K562 (cell line): ENCODE measurements at regions of chr7 and their contacts with region 1.

Region 1: GRCh38 chr7:128862571-128863432 is at the start of gene ATP6V1F:
- DNase-seq: peak; percentile 100
- ATAC-seq: peak; percentile 73
- H3K4me3 ChIP-seq: peak within 1 kb of the TSS; percentile 71
- H3K27ac ChIP-seq: peak within 1 kb of the TSS; percentile 87
- H3K4me1 ChIP-seq: peaks cover 38 to 68% of the 10 kb centered on the region in 2 experiments
- H3K27me3 ChIP-seq: no peaks in the 10 kb centered on the region
- CTCF ChIP-seq: peak in 1 of 3 experiments; percentile 12; a peak in 2 of 6 replicates
- EP300 ChIP-seq: no peak
- POLR2A ChIP-seq: peak; percentile 90
- RAD21 ChIP-seq: no peak
- polyA plus RNA-seq, gene ATP6V1F: 733 to 1,123 TPM

Region 2: DNA sequence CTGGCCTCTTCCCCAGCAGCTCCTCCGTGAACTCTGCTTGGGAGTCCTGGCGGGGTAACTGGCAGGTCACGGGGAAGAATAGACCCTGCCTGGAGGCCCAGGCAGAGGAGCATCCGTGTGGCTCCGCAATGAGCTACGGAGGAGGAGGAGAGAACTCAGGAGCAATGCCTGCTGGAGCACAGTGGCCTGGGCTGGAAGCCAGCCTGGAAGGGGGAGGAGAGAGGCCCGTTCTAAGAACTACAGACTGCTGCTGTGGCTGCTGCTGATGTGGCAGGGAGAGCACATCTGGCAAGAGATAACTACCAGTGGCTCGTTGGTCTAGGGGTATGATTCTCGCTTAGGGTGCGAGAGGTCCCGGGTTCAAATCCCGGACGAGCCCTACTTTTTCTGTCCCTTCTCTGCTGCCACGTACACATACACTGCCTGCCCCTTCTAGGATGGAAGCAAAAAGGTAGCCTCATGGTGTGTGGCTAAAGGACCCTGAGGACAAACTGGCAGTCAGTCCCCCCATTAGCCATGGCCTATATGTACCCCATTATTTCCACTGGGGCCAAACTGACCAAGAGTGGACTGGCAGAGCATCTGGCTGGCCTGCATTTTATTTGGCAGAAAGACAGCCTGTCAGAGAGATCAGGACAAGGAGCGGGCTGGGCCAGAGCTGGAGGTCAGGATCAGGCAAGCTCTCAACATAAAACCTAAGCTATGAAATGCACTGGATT is 79.5 kb before region 1 on chr7:
- CTCF ChIA-PET with region 1: no interaction called
- POLR2A ChIA-PET with region 1: interaction called, 3 read pairs
- in situ Hi-C with region 1: no loop called
- intact Hi-C with region 1: loop called (anchors 5 kb)
- DNase-seq: peak; percentile 92 to 95 (median 94)
- ATAC-seq: peak; percentile 93
- H3K4me3 ChIP-seq: peak overlapping the region; percentile 37
- H3K27ac ChIP-seq: peak overlapping the region; percentile 28
- H3K4me1 ChIP-seq: peaks cover 5 to 18% of the 10 kb centered on the region in 2 experiments; a peak in 4 of 5 replicates
- H3K27me3 ChIP-seq: no peaks in the 10 kb centered on the region; a peak in 1 of 5 replicates
- CTCF ChIP-seq: peak in 2 of 3 experiments; percentile 2 to 17; a peak in 1 of 6 replicates
- EP300 ChIP-seq: peak; percentile 86
- POLR2A ChIP-seq: no peak; the same call in 1 of the 2 replicates
- RAD21 ChIP-seq: peak; percentile 17 to 26; a peak in 2 of 4 replicates

Region 3: GRCh38 chr7:128849804-128850490 is 12.9 kb before region 1 on chr7:
- CTCF ChIA-PET with region 1: no interaction called
- POLR2A ChIA-PET with region 1: interaction called, 47 read pairs
- in situ Hi-C with region 1: no loop called
- intact Hi-C with region 1: no loop called
- DNase-seq: no peak
- ATAC-seq: no peak
- H3K4me3 ChIP-seq: no peak overlapping the region
- H3K27ac ChIP-seq: no peak overlapping the region
- H3K4me1 ChIP-seq: peaks cover 0 to 27% of the 10 kb centered on the region in 2 experiments; a peak in 1 of 5 replicates
- H3K27me3 ChIP-seq: no peaks in the 10 kb centered on the region
- CTCF ChIP-seq: no peak
- EP300 ChIP-seq: no peak
- POLR2A ChIP-seq: no peak
- RAD21 ChIP-seq: no peak

Region 4: GRCh38 chr7:128909625-128910257 is 46.9 kb after region 1 on chr7:
- CTCF ChIA-PET with region 1: no interaction called
- POLR2A ChIA-PET with region 1: no interaction called
- in situ Hi-C with region 1: loop called (anchors 5 kb)
- intact Hi-C with region 1: no loop called
- DNase-seq: no peak
- ATAC-seq: no peak
- H3K4me3 ChIP-seq: no peak overlapping the region
- H3K27ac ChIP-seq: no peak overlapping the region
- H3K4me1 ChIP-seq: peaks cover 0 to 30% of the 10 kb centered on the region in 2 experiments; a peak in 2 of 5 replicates
- H3K27me3 ChIP-seq: peaks cover 44 to 74% of the 10 kb centered on the region in 2 experiments
- CTCF ChIP-seq: no peak
- EP300 ChIP-seq: no peak
- POLR2A ChIP-seq: no peak
- RAD21 ChIP-seq: no peak

Region 5: DNA sequence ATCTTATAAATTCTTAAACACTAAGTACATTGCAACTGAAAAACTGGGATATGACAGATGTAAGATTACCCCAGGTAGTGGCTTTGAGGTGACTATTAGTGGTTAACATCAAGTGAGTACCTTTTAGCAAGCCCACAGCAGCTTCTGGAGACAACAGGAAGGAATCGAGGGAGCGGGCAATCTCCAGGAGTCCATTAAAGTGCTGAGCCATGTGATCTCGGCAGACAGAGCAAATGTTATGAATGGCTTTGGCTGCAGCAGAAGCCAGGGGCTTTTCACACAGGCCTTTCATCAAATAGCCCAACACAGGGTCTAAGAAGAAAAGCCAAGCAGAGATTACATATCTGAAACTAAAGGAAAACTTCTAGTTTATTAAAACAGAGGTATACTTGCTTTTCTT is 123.8 kb after region 1 on chr7:
- CTCF ChIA-PET with region 1: no interaction called
- POLR2A ChIA-PET with region 1: no interaction called
- in situ Hi-C with region 1: no loop called
- intact Hi-C with region 1: no loop called
- DNase-seq: no peak
- ATAC-seq: no peak
- H3K4me3 ChIP-seq: no peak overlapping the region
- H3K27ac ChIP-seq: no peak overlapping the region
- H3K4me1 ChIP-seq: no peaks in the 10 kb centered on the region
- H3K27me3 ChIP-seq: no peaks in the 10 kb centered on the region
- CTCF ChIP-seq: no peak
- EP300 ChIP-seq: no peak
- POLR2A ChIP-seq: no peak
- RAD21 ChIP-seq: no peak